ENCODE measurements at regions of chr12 and their contacts with region 1.

Region 1: DNA sequence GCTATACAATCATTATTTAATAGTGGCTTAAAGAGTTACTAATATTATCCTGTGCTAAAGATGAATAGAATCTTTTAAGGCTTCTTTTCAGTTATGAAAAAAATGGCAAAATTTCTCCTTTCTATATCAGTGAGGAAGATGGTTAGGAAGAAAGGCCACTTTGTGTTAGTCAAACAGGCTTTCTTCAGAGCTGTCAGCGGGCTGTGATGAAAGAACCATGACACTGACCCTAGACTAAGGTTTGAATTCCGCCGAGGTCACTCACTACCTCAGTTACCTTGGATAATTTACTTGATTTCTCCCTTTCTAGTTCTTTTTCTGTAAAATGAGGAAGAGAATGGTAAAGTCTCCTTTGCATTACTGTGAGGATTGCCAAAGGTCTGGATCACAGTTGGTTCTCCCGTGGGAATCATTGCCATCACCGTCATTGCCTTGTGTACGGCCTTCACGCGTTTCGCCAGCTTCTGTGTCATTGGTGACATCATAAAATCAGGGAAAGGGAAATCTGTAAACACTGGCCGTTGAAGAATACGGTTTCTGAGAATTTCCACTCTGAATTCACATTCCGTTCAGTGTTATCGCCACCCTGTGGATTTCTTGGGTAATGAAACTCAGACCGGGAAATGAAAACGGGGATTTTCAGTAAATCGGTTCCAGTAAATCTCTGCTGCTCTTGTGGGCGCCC is 26.7 kb upstream of the YBX3 start:
- DNase-seq: peak; percentile 42 to 87
- ATAC-seq: peak; percentile 89 to 99 (median 98)
- H3K4me3 ChIP-seq: no peak overlapping the region
- H3K4me3 Mint-ChIP-seq: no peak overlapping the region
- H3K27ac ChIP-seq: no peak overlapping the region
- H3K27ac Mint-ChIP-seq: peak overlapping the region in 1 of 2 donors; percentile 21
- H3K4me1 ChIP-seq: peaks cover 4% of the 10 kb centered on the region
- H3K4me1 Mint-ChIP-seq: peaks cover 6 to 11% of the 10 kb centered on the region in 2 donors
- H3K27me3 ChIP-seq: peaks cover 5% of the 10 kb centered on the region
- H3K27me3 Mint-ChIP-seq: peaks cover 30 to 56% of the 10 kb centered on the region in 2 donors
- CTCF ChIP-seq: peak; percentile 78

Region 2: DNA sequence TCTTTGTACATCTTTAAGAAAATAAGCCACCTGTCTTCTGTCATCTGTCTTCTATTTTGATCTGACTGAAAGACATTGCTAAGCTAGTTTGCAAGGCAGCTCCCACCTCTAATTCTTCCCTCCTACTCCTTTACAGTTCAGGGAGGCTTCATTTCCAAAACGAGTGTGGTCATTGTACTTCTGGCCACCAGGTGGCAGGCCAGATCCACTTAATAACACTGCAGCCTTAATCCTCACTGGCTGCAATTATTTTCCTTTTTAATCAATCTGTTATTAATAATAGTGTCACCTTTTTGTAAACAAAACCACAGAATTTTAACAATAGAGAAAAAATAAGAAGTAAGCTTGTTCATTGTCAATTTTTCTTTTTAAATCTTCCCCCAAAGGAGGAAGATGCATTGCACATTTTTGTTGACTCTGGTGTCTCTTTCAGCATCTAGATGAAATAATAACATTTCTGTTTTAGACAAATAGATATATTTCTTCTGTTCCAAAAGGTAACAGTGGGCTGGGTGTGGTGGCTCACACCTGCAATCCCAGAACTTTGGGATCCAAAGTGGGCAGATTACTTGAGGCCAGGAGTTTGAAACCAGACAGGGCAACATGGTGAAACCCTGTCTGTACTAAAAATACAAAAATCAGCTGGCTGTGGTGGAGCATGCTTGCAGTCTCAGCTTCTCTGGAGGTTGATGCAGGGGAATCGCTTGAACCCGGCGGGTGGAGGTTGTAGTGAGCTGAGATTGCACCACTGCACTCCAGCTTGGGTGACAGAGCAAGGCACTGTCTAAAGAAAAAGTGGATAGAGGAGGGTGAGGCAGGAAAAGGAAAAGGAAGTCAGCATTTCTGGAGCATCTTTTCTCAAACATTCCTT is 513.8 kb before region 1 on chr12:
- intact Hi-C with region 1: loop called (anchors 1 kb)
- DNase-seq: peak; percentile 53 to 83
- ATAC-seq: peak; percentile 76 to 84 (median 77)
- H3K4me3 ChIP-seq: no peak overlapping the region
- H3K4me3 Mint-ChIP-seq: peak overlapping the region; percentile 56
- H3K27ac ChIP-seq: peak overlapping the region; percentile 51
- H3K27ac Mint-ChIP-seq: peak overlapping the region; percentile 85 to 89
- H3K4me1 ChIP-seq: peaks cover 26% of the 10 kb centered on the region
- H3K4me1 Mint-ChIP-seq: peaks cover 57% of the 10 kb centered on the region in 2 donors
- H3K27me3 ChIP-seq: no peaks in the 10 kb centered on the region
- H3K27me3 Mint-ChIP-seq: no peaks in the 10 kb centered on the region
- CTCF ChIP-seq: peak; percentile 96

Region 3: GRCh38 chr12:10354502-10354901 is 395.3 kb before region 1 on chr12:
- intact Hi-C with region 1: no loop called
- DNase-seq: no peak
- ATAC-seq: no peak
- H3K4me3 ChIP-seq: no peak overlapping the region
- H3K4me3 Mint-ChIP-seq: no peak overlapping the region
- H3K27ac ChIP-seq: no peak overlapping the region
- H3K27ac Mint-ChIP-seq: peak overlapping the region in 1 of 2 donors; percentile 6
- H3K4me1 ChIP-seq: peaks cover 22% of the 10 kb centered on the region
- H3K4me1 Mint-ChIP-seq: peaks cover 26 to 33% of the 10 kb centered on the region in 2 donors
- H3K27me3 ChIP-seq: no peaks in the 10 kb centered on the region
- H3K27me3 Mint-ChIP-seq: no peaks in the 10 kb centered on the region
- CTCF ChIP-seq: no peak

Region 4: DNA sequence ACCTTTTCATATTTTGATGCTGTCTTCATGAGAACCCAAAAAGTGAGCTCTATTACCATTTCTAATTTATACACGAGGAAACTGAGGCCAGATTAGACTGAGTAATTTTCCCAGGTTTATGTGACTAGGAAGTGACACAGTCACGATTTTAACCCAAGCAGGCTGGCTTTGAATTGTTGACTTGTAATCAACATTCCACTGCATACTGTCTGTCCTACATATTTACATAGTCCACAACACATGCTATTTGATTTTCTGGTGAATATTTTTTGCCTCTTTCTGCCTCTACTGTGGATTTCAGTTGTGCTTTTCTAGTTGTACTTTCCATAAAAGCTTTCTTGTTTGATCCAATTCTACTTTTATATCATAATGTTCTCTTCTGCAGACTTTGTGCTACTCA is 44.4 kb after region 1 on chr12:
- intact Hi-C with region 1: no loop called
- DNase-seq: no peak
- ATAC-seq: no peak
- H3K4me3 ChIP-seq: no peak overlapping the region
- H3K4me3 Mint-ChIP-seq: no peak overlapping the region
- H3K27ac ChIP-seq: no peak overlapping the region
- H3K27ac Mint-ChIP-seq: no peak overlapping the region
- H3K4me1 ChIP-seq: no peaks in the 10 kb centered on the region
- H3K4me1 Mint-ChIP-seq: no peaks in the 10 kb centered on the region
- H3K27me3 ChIP-seq: peaks cover 4% of the 10 kb centered on the region
- H3K27me3 Mint-ChIP-seq: peaks cover 19% of the 10 kb centered on the region in 2 donors
- CTCF ChIP-seq: no peak